Psoas muscle (tissue), 8 donors: ENCODE measurements at regions of chr1 and their contacts with region 1.

Region 1: GRCh38 chr1:19728413-19729145 is 63.9 kb downstream of the HTR6 start:
- DNase-seq: no peak
- ATAC-seq: peak; percentile 48 to 80 (median 67)
- H3K4me3 ChIP-seq: no peak overlapping the region
- H3K27ac ChIP-seq: no peak overlapping the region
- H3K4me1 ChIP-seq: no peaks in the 10 kb centered on the region
- H3K27me3 ChIP-seq: no peaks in the 10 kb centered on the region
- CTCF ChIP-seq: no peak

Region 2: GRCh38 chr1:19861034-19861433 is 132.5 kb after region 1 on chr1:
- intact Hi-C with region 1: loop called in 1 of 2 experiments (anchors 10 kb)
- DNase-seq: no peak
- ATAC-seq: no peak
- H3K4me3 ChIP-seq: no peak overlapping the region
- H3K27ac ChIP-seq: no peak overlapping the region
- H3K4me1 ChIP-seq: no peaks in the 10 kb centered on the region
- H3K27me3 ChIP-seq: no peaks in the 10 kb centered on the region
- CTCF ChIP-seq: no peak